Motor neuron (in vitro differentiated cells): ENCODE measurements at regions of chr10 and their contacts with region 1.

Region 1: GRCh38 chr10:84139126-84140035 is at the start of gene GHITM:
- ATAC-seq: peak; percentile 92 to 98 (median 96)
- H3K4me3 ChIP-seq: peak within 1 kb of the TSS; percentile 56 to 89 (median 73)
- H3K27ac ChIP-seq: peak within 1 kb of the TSS; percentile 81 to 95
- H3K4me1 ChIP-seq: peaks cover 9 to 19% of the 10 kb centered on the region in 2 donors
- total RNA-seq, gene GHITM: 132 to 306 (median 173) TPM

Region 2: GRCh38 chr10:83945982-83946718 is 193.2 kb before region 1 on chr10:
- in situ Hi-C with region 1: no loop called
- ATAC-seq: peak in 5 of 8 experiments; percentile 82 to 99 (median 98)
- H3K4me3 ChIP-seq: peak overlapping the region in 1 of 5 donors; percentile 19
- H3K27ac ChIP-seq: no peak overlapping the region
- H3K4me1 ChIP-seq: peaks cover 4 to 22% of the 10 kb centered on the region in 2 donors

Region 3: GRCh38 chr10:84054743-84055142 is 84.6 kb before region 1 on chr10:
- in situ Hi-C with region 1: no loop called
- ATAC-seq: peak in 1 of 8 experiments; percentile 16
- H3K4me3 ChIP-seq: no peak overlapping the region
- H3K27ac ChIP-seq: no peak overlapping the region
- H3K4me1 ChIP-seq: no peaks in the 10 kb centered on the region

Region 4: GRCh38 chr10:84194424-84195040 is 55.2 kb after region 1 on chr10 and contains the start of gene CDHR1:
- in situ Hi-C with region 1: loop called in 1 of 9 experiments (anchors 10 kb)
- ATAC-seq: peak; percentile 79 to 93 (median 92)
- H3K4me3 ChIP-seq: peak within 1 kb of the TSS; percentile 37 to 48 (median 43)
- H3K27ac ChIP-seq: no peak within 1 kb of the TSS
- H3K4me1 ChIP-seq: peaks cover 4% of the 10 kb centered on the region in 2 donors
- total RNA-seq, gene CDHR1: 1.7 to 4.6 (median 3.0) TPM